ENCODE measurements at regions of chr16 and their contacts with region 1.

Region 1: DNA sequence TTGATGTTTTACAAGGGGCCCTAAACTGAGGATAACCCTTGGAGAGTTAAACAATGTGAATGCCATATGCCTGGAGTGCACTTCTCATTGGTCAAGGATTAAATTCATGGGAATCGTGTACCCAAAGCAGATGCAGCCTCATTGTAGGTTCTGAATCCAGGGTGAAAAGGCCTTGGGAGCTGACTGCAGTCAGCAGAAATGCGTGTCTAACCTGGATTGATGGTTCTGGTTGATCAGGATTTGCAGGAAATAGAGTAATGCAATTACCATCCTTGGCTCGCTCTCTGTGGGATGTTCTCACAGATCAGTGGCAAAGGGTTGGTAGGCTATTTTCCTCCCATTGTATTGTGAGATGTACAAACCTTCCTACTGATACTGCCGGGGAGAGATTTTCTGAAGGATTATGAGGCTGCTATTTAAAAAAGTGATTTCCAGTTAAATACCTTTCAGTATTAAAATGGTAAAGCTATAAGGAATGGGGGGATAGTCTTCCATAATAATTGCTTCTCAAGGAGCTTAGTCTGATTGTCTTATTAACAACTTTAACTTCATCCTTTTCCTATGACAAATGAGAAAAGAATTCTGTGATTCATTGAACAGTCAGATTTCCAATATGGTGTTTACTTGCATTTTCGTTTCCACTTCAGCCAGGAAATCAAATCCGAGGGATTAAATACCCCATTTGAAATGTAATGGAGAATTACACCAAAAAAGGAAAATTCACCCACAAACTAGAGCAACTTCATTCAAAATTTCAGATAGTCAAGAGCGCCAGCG is 1028.1 kb upstream of the EEF2KMT start:
- DNase-seq: no peak
- H3K4me3 ChIP-seq: no peak overlapping the region
- H3K27ac ChIP-seq: no peak overlapping the region
- H3K4me1 ChIP-seq: no peaks in the 10 kb centered on the region
- H3K27me3 ChIP-seq: no peaks in the 10 kb centered on the region
- CTCF ChIP-seq: no peak
- POLR2A ChIP-seq: no peak

Region 2: DNA sequence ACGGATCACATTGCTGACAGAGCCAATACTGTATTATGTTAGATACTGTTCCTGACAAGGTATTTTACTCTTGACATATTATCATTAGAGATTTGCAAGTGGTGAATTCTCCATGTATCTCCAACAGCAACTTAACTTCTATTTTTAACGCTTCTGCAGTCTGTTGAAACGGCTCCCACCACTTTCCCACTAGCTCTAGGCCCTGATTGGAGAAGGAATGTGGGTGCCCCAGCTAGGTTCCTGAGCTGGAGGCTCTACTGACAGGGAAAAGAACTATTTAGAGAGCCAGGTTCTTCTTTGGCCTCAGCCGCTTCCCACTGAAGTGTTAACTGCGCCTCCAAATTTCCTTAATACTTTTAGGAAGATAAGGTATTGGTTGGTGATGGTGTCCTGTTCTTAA is 1398.7 kb after region 1 on chr16:
- intact Hi-C with region 1: loop called (anchors 10 kb)
- DNase-seq: no peak
- H3K4me3 ChIP-seq: no peak overlapping the region
- H3K27ac ChIP-seq: no peak overlapping the region
- H3K4me1 ChIP-seq: no peaks in the 10 kb centered on the region
- H3K27me3 ChIP-seq: no peaks in the 10 kb centered on the region
- CTCF ChIP-seq: no peak
- POLR2A ChIP-seq: no peak